Activated CD8-positive, alpha-beta T cell treated with anti-CD3 and anti-CD28 coated beads for 36 hours (primary cell): ENCODE measurements at regions of chr11 and their contacts with region 1.

Region 1: GRCh38 chr11:71977743-71978418 is 20.8 kb upstream of the IL18BP start:
- DNase-seq: peak; percentile 72
- ATAC-seq: peak; percentile 65
- H3K4me3 Mint-ChIP-seq: no peak overlapping the region
- H3K27ac Mint-ChIP-seq: no peak overlapping the region
- H3K4me1 Mint-ChIP-seq: no peaks in the 10 kb centered on the region
- H3K27me3 Mint-ChIP-seq: no peaks in the 10 kb centered on the region
- CTCF ChIP-seq: peak; percentile 65

Region 2: DNA sequence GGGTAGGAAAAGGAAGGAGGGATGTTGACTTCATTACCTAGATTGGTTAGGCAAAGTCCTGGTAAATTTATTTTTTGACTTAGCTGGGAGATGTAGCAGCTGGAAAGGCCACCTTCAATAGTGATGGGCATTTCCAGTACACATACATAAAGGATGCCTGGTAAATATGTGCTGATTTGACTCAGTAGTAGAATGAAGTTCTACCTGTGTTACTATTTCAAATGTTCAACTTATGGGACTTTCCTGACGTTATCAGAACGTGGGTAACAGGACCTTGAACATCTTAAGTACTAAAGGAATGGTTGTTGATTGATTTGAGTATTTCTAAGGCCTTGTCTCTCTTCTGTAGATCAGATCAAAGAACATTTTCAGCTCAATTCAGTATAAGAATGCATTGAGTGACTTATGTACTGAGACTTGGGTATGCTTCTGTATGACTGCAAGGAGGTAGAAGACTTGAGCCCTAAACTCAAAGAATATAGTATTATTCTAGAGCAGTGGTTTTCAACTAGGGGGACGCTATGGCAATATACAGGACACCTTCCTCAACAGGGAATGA is 21.9 kb before region 1 on chr11:
- CTCF ChIA-PET with region 1: interaction called, 13 read pairs
- POLR2A ChIA-PET with region 1: no interaction called
- intact Hi-C with region 1: no loop called
- DNase-seq: no peak
- ATAC-seq: no peak
- H3K4me3 Mint-ChIP-seq: no peak overlapping the region
- H3K27ac Mint-ChIP-seq: no peak overlapping the region
- H3K4me1 Mint-ChIP-seq: peaks cover 18% of the 10 kb centered on the region
- H3K27me3 Mint-ChIP-seq: no peaks in the 10 kb centered on the region
- CTCF ChIP-seq: no peak

Region 3: DNA sequence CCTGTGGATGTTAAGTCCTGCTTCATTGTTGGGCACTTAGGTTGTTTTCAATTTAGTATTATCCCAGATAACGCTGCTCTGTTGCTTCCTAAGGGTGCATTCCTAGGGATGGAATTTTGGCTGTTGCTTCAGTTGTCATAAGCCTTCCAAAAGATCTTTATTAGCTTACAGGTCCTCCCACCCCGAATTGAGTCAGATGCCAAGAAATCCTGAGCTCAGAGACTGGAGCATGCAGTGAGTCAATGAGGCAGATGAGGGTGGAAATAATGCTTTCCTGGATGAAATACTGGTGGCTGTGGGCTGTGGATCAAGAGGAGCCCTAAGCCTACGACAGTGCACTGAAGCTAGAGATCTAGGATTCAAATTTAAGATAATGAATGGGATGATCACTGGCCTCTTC is 10.2 kb after region 1 on chr11:
- CTCF ChIA-PET with region 1: interaction called, 25 read pairs
- POLR2A ChIA-PET with region 1: no interaction called
- intact Hi-C with region 1: no loop called
- DNase-seq: no peak
- ATAC-seq: no peak
- H3K4me3 Mint-ChIP-seq: no peak overlapping the region
- H3K27ac Mint-ChIP-seq: no peak overlapping the region
- H3K4me1 Mint-ChIP-seq: peaks cover 8% of the 10 kb centered on the region
- H3K27me3 Mint-ChIP-seq: no peaks in the 10 kb centered on the region
- CTCF ChIP-seq: no peak

Region 4: DNA sequence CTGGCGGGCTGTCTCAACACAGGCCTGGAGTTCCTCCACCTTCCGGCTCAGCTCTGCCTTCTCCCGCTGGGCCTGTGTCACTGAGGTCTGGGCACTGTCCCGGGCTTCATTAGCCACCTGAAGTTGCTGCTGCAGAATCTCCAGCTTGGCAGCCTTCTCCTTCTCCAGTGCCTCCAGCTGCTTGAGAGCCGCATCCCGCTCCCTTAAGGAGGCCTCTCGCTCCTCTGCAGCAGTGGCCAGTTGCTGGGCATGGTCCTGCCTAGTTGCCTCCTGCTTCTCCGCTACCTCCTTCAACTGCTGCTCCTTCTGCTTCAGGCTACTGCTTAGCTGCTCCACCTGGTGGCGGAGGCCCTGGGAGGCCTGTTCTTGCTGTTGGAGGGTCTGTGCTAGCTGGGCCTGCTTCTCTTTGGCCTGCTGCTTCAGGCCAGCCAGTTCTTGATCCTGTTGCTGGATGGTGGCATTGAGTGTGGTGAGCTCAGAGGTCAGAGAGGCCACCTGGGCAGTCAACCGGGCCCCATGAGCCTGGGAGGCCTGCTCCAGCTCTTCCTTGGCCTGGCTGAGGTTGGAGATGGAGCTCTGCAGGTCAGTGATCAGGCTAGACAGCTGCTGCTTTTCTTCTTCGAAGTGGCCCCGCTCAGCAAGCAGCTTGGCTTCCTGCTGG is 37.8 kb after region 1 on chr11:
- CTCF ChIA-PET with region 1: interaction called, 15 read pairs
- POLR2A ChIA-PET with region 1: interaction called, 5 read pairs
- intact Hi-C with region 1: no loop called
- DNase-seq: peak; percentile 17
- ATAC-seq: peak; percentile 25
- H3K4me3 Mint-ChIP-seq: no peak overlapping the region
- H3K27ac Mint-ChIP-seq: no peak overlapping the region
- H3K4me1 Mint-ChIP-seq: no peaks in the 10 kb centered on the region
- H3K27me3 Mint-ChIP-seq: no peaks in the 10 kb centered on the region
- CTCF ChIP-seq: no peak

Region 5: GRCh38 chr11:72091005-72091691 is 113.3 kb after region 1 on chr11:
- CTCF ChIA-PET with region 1: interaction called, 19 read pairs
- POLR2A ChIA-PET with region 1: no interaction called
- intact Hi-C with region 1: no loop called
- DNase-seq: peak; percentile 82
- ATAC-seq: peak; percentile 97
- H3K4me3 Mint-ChIP-seq: no peak overlapping the region
- H3K27ac Mint-ChIP-seq: peak overlapping the region; percentile 75
- H3K4me1 Mint-ChIP-seq: peaks cover 5% of the 10 kb centered on the region
- H3K27me3 Mint-ChIP-seq: no peaks in the 10 kb centered on the region
- CTCF ChIP-seq: peak; percentile 80